B cell (primary cell): ENCODE measurements at regions of chr2 and their contacts with region 1.

Region 1: DNA sequence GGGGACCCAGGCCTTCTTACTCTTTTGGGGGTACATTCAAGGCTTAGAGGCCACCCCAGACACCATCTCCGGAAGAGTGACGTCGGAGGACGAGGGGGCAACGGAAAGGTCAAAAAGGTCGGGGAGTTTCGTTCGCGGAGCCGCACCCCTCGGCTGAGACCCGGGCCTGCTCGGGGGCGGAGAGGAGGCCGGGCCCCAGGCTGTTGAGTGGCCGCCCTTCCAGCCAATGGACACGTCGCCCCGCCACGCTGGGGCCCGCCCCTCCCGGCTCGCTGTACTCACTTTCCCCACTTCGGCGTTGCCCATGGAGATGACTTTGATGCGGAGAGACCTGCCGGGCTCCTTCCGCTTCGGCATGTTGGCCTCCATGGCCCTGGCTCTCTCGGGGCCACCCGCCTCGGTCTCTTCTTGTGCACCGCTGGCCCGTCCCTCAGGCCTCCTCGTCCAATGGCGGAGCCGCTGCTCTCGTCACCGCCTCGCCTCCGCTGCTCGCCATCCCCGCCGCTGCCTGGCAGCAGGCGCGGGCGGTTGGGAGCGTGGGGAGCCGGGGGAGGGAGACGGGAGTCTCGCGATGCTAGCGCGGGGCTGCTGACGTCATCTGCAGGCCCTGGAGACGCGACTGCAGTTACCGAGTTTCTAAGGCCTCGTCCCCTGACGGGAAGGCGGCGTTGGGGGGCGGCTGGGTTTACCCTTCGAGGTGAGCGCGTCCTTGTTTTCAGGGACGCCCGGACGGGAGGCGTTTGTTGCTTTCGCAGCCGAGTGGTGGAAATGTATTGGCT is at the start of gene DNAJC27:
- DNase-seq: peak; percentile 99
- ATAC-seq: peak; percentile 90
- H3K4me3 ChIP-seq: peak within 1 kb of the TSS; percentile 73 to 85 (median 82)
- H3K4me3 Mint-ChIP-seq: peak within 1 kb of the TSS; percentile 97
- H3K27ac ChIP-seq: peak within 1 kb of the TSS; percentile 97 to 100
- H3K27ac Mint-ChIP-seq: peak within 1 kb of the TSS; percentile 100
- H3K4me1 ChIP-seq: peaks cover 8 to 15% of the 10 kb centered on the region in 2 donors
- H3K4me1 Mint-ChIP-seq: peaks cover 14% of the 10 kb centered on the region
- H3K27me3 ChIP-seq: no peaks in the 10 kb centered on the region
- H3K27me3 Mint-ChIP-seq: no peaks in the 10 kb centered on the region
- CTCF ChIP-seq: no peak
- total RNA-seq, gene DNAJC27: 15.6 and 16.6 TPM in 2 replicates

Region 2: GRCh38 chr2:24779116-24779515 is 192.6 kb before region 1 on chr2:
- CTCF ChIA-PET with region 1: no interaction called
- POLR2A ChIA-PET with region 1: no interaction called
- intact Hi-C with region 1: no loop called
- DNase-seq: no peak
- ATAC-seq: no peak
- H3K4me3 ChIP-seq: no peak overlapping the region
- H3K4me3 Mint-ChIP-seq: no peak overlapping the region
- H3K27ac ChIP-seq: no peak overlapping the region
- H3K27ac Mint-ChIP-seq: no peak overlapping the region
- H3K4me1 ChIP-seq: no peaks in the 10 kb centered on the region
- H3K4me1 Mint-ChIP-seq: peaks cover 2% of the 10 kb centered on the region
- H3K27me3 ChIP-seq: peaks cover 0 to 33% (median 25%) of the 10 kb centered on the region in 4 experiments
- H3K27me3 Mint-ChIP-seq: peaks cover 25% of the 10 kb centered on the region
- CTCF ChIP-seq: no peak

Region 3: DNA sequence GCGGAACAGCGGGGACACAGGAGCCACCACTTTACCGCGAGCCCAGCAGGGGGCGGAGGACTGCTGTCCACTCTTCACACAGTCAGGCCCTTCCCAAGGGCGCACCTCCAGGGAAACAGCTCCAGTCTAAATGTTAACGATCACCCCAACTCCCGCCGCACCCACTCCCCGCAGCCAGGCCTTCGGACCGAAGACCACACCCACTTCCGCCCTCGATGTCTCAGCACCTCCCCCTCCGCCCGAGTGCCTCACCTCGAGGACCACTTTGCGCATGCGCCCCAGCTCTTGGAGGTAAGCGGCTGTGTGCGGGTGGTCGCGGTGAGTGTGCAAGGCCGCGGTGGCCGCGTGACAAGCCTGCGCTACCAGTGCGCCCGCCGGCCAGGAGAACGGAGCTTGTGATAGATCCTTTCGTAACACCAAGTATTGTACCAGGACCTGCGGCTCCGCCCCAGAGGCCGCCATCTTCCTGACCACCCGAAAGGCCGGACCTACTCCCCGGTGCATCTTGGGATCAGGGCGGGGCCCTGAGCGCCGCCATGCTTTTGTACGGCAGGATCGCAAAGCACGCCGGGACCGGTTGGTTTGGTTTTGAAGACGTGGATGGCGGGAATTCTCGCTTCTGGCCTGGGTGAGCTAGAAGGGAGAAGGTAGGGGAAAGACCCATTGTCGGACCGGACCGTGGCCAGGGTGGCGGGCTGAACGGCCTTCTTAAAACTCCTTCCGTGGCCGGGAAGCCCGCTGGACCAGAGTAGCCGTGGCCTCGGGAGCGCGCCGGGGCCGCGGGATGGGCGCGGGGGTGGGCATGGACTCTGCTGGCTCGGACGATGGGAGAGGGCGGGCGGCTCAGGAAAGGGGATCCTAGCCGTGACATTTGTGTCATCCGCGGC is 178.6 kb before region 1 on chr2 and contains the starts of genes CENPO and PTRHD1:
- CTCF ChIA-PET with region 1: no interaction called
- POLR2A ChIA-PET with region 1: no interaction called
- intact Hi-C with region 1: loop called (anchors 1 kb)
- DNase-seq: peak; percentile 99
- ATAC-seq: peak; percentile 96
- H3K4me3 ChIP-seq: peak within 1 kb of the TSS; percentile 51 to 91 (median 82)
- H3K4me3 Mint-ChIP-seq: peak within 1 kb of the TSS; percentile 99
- H3K27ac ChIP-seq: peak within 1 kb of the TSS; percentile 84 to 87
- H3K27ac Mint-ChIP-seq: peak within 1 kb of the TSS; percentile 100
- H3K4me1 ChIP-seq: peaks cover 10 to 16% of the 10 kb centered on the region in 2 donors
- H3K4me1 Mint-ChIP-seq: peaks cover 19% of the 10 kb centered on the region
- H3K27me3 ChIP-seq: no peaks in the 10 kb centered on the region
- H3K27me3 Mint-ChIP-seq: no peaks in the 10 kb centered on the region
- CTCF ChIP-seq: peak; percentile 68
- total RNA-seq, gene CENPO: 10.4 and 10.8 TPM in 2 replicates
- total RNA-seq, gene PTRHD1: 20.2 and 20.4 TPM in 2 replicates

Region 4: DNA sequence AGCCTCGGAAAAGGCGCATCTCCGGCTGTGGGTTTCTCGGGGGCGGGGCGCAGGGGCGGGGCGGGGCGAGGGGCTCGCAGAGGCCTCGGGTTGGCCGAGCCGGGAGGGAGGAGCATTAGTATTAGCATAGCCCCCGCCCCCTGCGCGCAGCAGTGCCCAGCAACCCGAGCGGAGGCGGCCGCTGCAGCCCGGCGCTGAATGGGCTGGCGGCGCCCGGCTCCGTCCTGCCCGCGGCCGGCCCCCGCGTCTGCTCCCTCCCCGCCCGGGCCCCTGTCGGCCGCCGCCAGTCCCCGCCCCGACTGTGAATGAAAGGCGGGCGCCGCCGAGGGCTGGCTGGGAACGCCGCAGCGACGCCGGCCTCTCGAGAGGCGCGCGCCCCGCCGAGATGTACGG is 70.2 kb after region 1 on chr2 and contains the start of gene EFR3B:
- CTCF ChIA-PET with region 1: interaction called, 3 read pairs
- POLR2A ChIA-PET with region 1: no interaction called
- intact Hi-C with region 1: loop called (anchors 1 kb)
- DNase-seq: peak; percentile 92
- ATAC-seq: peak; percentile 98
- H3K4me3 ChIP-seq: peak within 1 kb of the TSS; percentile 13 to 76 (median 52)
- H3K4me3 Mint-ChIP-seq: peak within 1 kb of the TSS; percentile 91
- H3K27ac ChIP-seq: no peak within 1 kb of the TSS
- H3K27ac Mint-ChIP-seq: no peak within 1 kb of the TSS
- H3K4me1 ChIP-seq: peaks cover 23 to 30% of the 10 kb centered on the region in 2 donors
- H3K4me1 Mint-ChIP-seq: peaks cover 28% of the 10 kb centered on the region
- H3K27me3 ChIP-seq: peaks cover 0 to 44% (median 24%) of the 10 kb centered on the region in 4 experiments
- H3K27me3 Mint-ChIP-seq: peaks cover 47% of the 10 kb centered on the region
- CTCF ChIP-seq: no peak
- total RNA-seq, gene EFR3B: 0.12 and 0.15 TPM in 2 replicates

Region 5: DNA sequence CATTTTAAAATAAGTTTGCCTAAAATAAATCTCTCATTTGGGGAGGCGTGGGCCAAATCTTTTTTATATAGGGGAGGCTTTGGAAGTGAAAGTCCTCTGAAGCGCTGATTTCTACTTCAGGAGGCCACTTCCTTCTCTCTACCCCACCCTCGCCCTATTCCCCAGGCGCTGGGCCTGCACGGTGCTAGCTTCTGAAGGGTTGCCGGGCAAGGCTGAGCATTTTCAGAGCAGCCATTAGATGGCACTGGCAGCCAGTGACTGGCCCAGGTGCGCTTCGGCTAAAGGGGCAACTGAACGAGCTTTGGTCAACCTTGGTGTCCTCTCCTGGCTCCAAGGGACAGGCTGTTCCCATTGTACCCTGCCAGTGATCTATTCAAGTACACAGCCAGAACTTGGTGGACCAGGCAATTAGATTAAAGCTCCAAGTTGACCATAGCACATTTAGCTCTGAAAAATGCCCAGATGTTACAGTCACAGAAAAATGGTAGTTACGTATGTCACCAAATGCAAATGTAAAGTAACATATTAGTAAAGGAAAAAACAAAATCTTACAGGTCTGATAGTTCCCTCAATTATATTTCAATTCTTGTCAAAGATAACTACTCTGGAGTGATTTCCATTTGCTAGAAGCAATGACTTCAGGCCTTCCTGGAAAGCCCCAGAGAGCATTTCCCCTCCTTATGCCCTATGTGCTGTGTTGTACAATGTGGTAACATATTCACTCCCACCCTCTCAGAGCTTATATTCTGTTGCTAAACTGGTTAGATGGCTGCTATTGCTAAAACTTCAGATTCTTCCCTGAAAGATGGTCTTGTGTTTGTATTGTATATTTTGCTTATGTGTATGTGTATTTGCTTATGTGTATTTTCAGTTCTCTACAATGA is 194.5 kb after region 1 on chr2:
- CTCF ChIA-PET with region 1: interaction called, 10 read pairs
- POLR2A ChIA-PET with region 1: interaction called, 4 read pairs
- intact Hi-C with region 1: no loop called
- DNase-seq: peak; percentile 90
- ATAC-seq: peak; percentile 95
- H3K4me3 ChIP-seq: no peak overlapping the region
- H3K4me3 Mint-ChIP-seq: peak overlapping the region; percentile 76
- H3K27ac ChIP-seq: peak overlapping the region; percentile 34 to 46
- H3K27ac Mint-ChIP-seq: no peak overlapping the region
- H3K4me1 ChIP-seq: peaks cover 36 to 40% of the 10 kb centered on the region in 2 donors
- H3K4me1 Mint-ChIP-seq: peaks cover 41% of the 10 kb centered on the region
- H3K27me3 ChIP-seq: peaks cover 0 to 34% (median 21%) of the 10 kb centered on the region in 4 experiments
- H3K27me3 Mint-ChIP-seq: peaks cover 36% of the 10 kb centered on the region
- CTCF ChIP-seq: peak; percentile 67

Region 6: DNA sequence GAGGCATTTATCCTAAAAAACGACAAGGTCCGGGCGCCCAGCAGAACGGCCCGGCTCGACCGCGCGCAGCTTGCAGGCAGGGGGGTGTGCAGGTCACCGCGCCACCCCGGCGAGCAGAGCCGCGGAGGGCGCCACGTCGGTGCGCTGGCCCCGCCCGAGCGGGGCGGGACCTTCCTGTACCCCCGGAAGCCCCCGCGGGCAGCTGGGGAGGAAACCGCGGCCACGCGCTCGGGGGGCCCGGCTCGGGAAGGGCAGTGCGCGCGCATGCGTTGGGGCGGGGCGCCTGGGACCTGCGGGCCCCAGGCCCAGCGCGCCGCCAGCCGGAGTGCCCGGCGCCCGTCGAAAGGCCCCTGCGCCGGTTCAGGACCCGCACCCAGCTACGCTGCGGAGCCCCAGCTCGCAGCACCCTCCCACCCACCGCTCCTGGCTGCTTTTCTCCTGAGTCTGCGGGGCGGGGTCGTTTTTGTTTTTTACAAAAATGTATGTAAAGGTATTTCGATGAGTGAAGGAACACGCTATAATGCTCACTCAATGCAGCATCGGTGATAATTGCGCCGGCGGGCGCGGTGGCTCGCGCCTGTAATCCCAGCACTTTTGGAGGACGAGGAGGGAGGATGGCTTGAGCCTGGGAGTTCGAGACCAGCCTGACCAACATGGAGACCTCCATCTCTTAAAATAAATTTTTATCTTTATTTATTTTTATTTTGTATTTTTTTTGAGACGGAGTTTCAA is 244.4 kb after region 1 on chr2:
- CTCF ChIA-PET with region 1: no interaction called
- POLR2A ChIA-PET with region 1: no interaction called
- intact Hi-C with region 1: loop called (anchors 2 kb)
- DNase-seq: peak; percentile 90
- ATAC-seq: peak; percentile 94
- H3K4me3 ChIP-seq: peak overlapping the region; percentile 45 to 71 (median 61)
- H3K4me3 Mint-ChIP-seq: peak overlapping the region; percentile 77
- H3K27ac ChIP-seq: peak overlapping the region; percentile 50 to 68
- H3K27ac Mint-ChIP-seq: peak overlapping the region; percentile 83
- H3K4me1 ChIP-seq: peaks cover 8 to 29% of the 10 kb centered on the region in 2 donors
- H3K4me1 Mint-ChIP-seq: peaks cover 30% of the 10 kb centered on the region
- H3K27me3 ChIP-seq: no peaks in the 10 kb centered on the region
- H3K27me3 Mint-ChIP-seq: no peaks in the 10 kb centered on the region
- CTCF ChIP-seq: no peak

Region 7: DNA sequence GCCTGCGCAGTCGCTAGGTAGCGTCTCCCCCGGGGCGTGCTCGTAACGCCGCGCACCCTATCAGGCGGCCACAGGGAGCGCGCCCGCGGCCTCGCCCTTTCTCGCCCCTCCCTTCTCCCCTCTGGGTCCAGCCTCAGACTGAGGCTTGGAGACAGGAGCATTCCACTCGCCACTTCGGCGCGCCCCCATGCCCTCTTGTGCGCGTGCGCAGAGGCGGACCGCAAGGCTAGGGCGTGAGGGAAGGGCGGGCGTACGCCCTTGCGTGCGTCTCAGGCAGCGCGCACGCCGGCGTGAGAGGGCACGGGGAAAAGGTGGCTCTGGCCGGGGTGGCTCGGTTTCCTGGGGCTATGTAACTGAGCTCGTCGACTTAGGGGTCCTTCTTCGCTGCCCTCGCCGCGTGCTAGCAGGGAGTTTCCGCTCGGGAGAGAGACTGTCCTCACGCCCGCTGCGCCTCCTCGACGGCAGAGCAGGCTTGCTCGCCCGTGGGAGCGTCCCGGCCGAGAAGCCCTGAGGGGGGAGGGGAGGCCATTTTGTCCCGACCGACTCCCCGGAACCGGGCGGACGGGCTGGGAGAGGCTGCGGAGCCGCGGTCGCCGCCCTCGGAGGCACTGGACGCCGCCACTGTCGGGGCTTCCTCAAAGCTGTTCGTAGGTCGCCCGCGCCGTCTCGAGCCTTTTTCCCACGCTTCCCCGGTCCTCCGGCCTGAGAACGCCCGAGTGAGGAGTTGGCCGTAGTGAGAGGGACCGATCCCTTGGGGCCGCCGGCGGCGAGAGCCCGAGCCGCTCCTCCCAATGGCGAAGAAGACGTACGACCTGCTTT is 1062.3 kb after region 1 on chr2 and contains the start of gene RAB10:
- CTCF ChIA-PET with region 1: no interaction called
- POLR2A ChIA-PET with region 1: no interaction called
- intact Hi-C with region 1: loop called (anchors 5 kb)
- DNase-seq: peak; percentile 100
- ATAC-seq: peak; percentile 91
- H3K4me3 ChIP-seq: peak within 1 kb of the TSS; percentile 78 to 97 (median 89)
- H3K4me3 Mint-ChIP-seq: peak within 1 kb of the TSS; percentile 97
- H3K27ac ChIP-seq: peak within 1 kb of the TSS; percentile 81 to 94
- H3K27ac Mint-ChIP-seq: peak within 1 kb of the TSS; percentile 98
- H3K4me1 ChIP-seq: peaks cover 22 to 29% of the 10 kb centered on the region in 2 donors
- H3K4me1 Mint-ChIP-seq: peaks cover 39% of the 10 kb centered on the region
- H3K27me3 ChIP-seq: no peaks in the 10 kb centered on the region
- H3K27me3 Mint-ChIP-seq: no peaks in the 10 kb centered on the region
- CTCF ChIP-seq: no peak
- total RNA-seq, gene RAB10: 64.1 and 66.7 TPM in 2 replicates

Region 8: DNA sequence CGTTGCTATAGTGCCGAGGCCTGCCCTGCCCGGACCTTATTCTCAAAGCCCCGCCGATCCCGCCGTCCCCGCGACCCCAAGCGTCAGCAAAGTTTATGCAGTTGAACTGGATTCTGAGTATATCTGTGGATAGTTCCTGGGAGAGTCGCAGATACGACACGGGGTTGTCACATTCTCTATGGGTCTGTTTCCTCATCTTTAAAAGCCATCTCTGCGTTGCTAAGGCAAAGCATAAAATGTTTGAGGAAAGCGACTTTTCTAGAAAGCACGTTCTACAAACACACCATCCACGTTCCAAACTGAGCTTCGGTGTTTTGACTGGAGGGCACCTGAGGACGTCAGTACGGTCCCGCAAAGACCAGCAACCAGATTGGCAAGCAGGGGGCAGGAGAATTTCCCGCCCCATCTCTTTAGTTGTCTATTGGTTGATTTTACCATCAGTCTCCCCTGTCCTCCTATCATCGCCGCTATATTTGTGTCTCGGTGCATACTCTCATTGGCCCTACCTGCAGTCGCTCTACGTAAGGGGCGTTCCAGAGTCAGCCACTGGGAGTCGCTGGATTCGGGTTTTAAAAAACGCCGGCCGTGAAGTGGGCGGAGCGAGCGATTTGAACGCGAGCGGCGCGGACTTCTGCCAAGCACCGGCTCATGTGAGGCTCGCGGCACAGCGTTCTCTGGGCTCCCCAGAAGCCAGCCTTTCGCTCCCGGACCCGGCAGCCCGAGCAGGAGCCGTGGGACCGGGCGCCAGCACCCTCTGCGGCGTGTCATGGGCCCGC is 1813.9 kb after region 1 on chr2 and contains the start of gene CENPA:
- CTCF ChIA-PET with region 1: no interaction called
- POLR2A ChIA-PET with region 1: no interaction called
- intact Hi-C with region 1: loop called (anchors 10 kb)
- DNase-seq: peak; percentile 98
- ATAC-seq: peak; percentile 99
- H3K4me3 ChIP-seq: peak within 1 kb of the TSS; percentile 51 to 81 (median 71)
- H3K4me3 Mint-ChIP-seq: peak within 1 kb of the TSS; percentile 93
- H3K27ac ChIP-seq: peak within 1 kb of the TSS; percentile 27 to 41
- H3K27ac Mint-ChIP-seq: peak within 1 kb of the TSS; percentile 83
- H3K4me1 ChIP-seq: peaks cover 8 to 14% of the 10 kb centered on the region in 2 donors
- H3K4me1 Mint-ChIP-seq: peaks cover 13% of the 10 kb centered on the region
- H3K27me3 ChIP-seq: no peaks in the 10 kb centered on the region
- H3K27me3 Mint-ChIP-seq: peaks cover 3% of the 10 kb centered on the region
- CTCF ChIP-seq: peak; percentile 7
- total RNA-seq, gene CENPA: not detected in 2 replicates